Activated CD4-positive, alpha-beta memory T cell treated with anti-CD3 and anti-CD28 coated beads for 36 hours (primary cell): ENCODE measurements at regions of chr3 and their contacts with region 1.

Region 1: GRCh38 chr3:33807190-33807589 is 8.8 kb downstream of the PDCD6IP start:
- DNase-seq: no peak
- H3K4me3 Mint-ChIP-seq: no peak overlapping the region
- H3K27ac Mint-ChIP-seq: no peak overlapping the region
- H3K4me1 Mint-ChIP-seq: peaks cover 77% of the 10 kb centered on the region
- H3K27me3 Mint-ChIP-seq: no peaks in the 10 kb centered on the region

Region 2: GRCh38 chr3:33149342-33149741 is 657.8 kb before region 1 on chr3:
- CTCF ChIA-PET with region 1: no interaction called
- POLR2A ChIA-PET with region 1: no interaction called
- intact Hi-C with region 1: no loop called
- DNase-seq: no peak
- H3K4me3 Mint-ChIP-seq: no peak overlapping the region
- H3K27ac Mint-ChIP-seq: no peak overlapping the region
- H3K4me1 Mint-ChIP-seq: no peaks in the 10 kb centered on the region
- H3K27me3 Mint-ChIP-seq: peaks cover 10% of the 10 kb centered on the region

Region 3: DNA sequence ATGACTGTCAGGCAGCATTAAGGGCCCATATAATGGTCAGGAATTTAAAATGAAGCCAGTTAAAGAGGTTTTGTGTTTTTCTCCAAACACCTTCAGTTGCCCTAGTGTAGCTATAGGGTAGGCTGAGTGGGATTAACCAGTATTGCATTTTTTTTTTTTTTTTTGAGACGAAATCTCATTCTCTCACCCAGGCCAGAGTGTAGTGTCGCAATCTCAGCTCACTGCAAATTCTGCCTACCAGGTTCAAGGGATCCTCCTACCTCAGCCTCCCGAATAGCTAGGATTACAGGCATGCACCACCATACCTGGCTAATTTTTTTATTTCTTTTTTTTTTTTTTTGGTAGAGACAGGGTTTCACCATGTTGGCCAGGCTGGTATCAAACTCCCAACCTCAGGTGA is 96.1 kb before region 1 on chr3:
- CTCF ChIA-PET with region 1: no interaction called
- POLR2A ChIA-PET with region 1: no interaction called
- intact Hi-C with region 1: no loop called
- DNase-seq: no peak
- H3K4me3 Mint-ChIP-seq: no peak overlapping the region
- H3K27ac Mint-ChIP-seq: no peak overlapping the region
- H3K4me1 Mint-ChIP-seq: peaks cover 14% of the 10 kb centered on the region
- H3K27me3 Mint-ChIP-seq: no peaks in the 10 kb centered on the region

Region 4: DNA sequence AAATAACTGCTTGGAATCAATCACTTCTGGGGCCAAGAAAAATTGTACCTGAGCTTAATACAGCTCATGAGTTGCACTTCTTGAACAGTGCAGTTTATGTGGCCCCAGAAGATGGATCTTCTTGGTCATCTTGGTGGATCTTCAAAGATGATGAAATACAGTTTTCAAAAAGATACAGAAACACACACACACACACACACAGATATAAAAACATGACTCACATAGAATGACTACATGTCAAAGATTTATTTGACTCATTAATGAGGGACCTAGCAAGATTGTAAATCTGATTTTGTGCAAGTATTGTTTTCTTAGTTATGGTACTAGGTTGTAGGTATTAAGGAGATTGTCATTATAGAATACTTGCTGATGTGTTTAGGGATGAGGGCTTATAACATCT is 23.9 kb after region 1 on chr3:
- CTCF ChIA-PET with region 1: no interaction called
- POLR2A ChIA-PET with region 1: no interaction called
- intact Hi-C with region 1: loop called (anchors 2 kb)
- DNase-seq: no peak
- H3K4me3 Mint-ChIP-seq: no peak overlapping the region
- H3K27ac Mint-ChIP-seq: peak overlapping the region; percentile 23
- H3K4me1 Mint-ChIP-seq: peaks cover 30% of the 10 kb centered on the region
- H3K27me3 Mint-ChIP-seq: no peaks in the 10 kb centered on the region